Left lung (tissue), 14 donors: ENCODE measurements at regions of chr19 and their contacts with region 1.

Region 1: DNA sequence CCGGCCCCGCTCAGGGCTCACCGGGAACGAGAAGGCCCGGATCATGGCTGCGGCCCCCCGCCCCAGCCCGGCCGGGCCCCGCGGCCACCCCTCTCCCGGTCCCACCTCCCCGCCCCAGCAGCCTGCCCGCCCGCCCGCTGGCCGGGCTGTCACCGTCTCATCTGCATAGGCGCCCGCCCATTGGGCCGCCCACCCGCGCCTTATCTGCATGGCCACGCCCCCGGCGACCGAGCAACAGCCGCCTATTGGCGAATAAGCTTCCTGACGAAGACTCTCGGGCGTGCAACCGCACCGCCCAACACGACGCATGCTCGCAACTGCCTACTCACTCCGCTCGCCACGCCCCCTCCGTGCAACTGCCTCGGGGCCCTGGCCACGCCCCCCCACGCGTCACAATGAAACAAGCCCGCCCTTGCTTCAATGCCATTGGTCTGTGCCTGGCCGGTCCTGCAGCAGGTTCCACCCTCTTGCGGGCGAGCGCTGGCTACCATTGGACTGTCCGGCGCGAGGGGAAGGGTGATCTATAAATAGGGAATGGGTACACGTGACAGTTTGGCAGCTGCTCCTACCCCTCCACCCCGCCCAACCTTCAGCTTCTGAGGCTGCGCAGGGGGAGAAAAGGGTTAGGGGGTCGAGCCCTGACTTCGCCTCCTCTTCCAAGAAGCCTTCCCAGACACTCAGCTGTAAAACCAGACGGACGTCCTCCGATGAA is at the start of gene DACT3:
- DNase-seq: peak; percentile 99 to 100 (median 100)
- ATAC-seq: peak; percentile 95
- H3K4me3 ChIP-seq: peak within 1 kb of the TSS; percentile 40 to 54
- H3K27ac ChIP-seq: peak within 1 kb of the TSS; percentile 72 to 77
- H3K4me1 ChIP-seq: peaks cover 0 to 31% of the 10 kb centered on the region in 2 donors
- H3K27me3 ChIP-seq: peaks cover 14 to 47% of the 10 kb centered on the region in 2 donors
- CTCF ChIP-seq: peak in 1 of 2 donors; percentile 40
- polyA plus RNA-seq, gene DACT3: 37.6 to 53.4 (median 45.4) TPM

Region 2: GRCh38 chr19:46529622-46530462 is 131.3 kb before region 1 on chr19:
- intact Hi-C with region 1: loop called in 1 of 2 experiments (anchors 10 kb)
- DNase-seq: peak; percentile 54 to 89 (median 83)
- ATAC-seq: peak; percentile 87
- H3K4me3 ChIP-seq: no peak overlapping the region
- H3K27ac ChIP-seq: peak overlapping the region in 1 of 2 donors; percentile 23
- H3K4me1 ChIP-seq: peaks cover 6 to 17% of the 10 kb centered on the region in 2 donors
- H3K27me3 ChIP-seq: peaks cover 0 to 12% of the 10 kb centered on the region in 2 donors
- CTCF ChIP-seq: peak; percentile 85 to 90

Region 3: DNA sequence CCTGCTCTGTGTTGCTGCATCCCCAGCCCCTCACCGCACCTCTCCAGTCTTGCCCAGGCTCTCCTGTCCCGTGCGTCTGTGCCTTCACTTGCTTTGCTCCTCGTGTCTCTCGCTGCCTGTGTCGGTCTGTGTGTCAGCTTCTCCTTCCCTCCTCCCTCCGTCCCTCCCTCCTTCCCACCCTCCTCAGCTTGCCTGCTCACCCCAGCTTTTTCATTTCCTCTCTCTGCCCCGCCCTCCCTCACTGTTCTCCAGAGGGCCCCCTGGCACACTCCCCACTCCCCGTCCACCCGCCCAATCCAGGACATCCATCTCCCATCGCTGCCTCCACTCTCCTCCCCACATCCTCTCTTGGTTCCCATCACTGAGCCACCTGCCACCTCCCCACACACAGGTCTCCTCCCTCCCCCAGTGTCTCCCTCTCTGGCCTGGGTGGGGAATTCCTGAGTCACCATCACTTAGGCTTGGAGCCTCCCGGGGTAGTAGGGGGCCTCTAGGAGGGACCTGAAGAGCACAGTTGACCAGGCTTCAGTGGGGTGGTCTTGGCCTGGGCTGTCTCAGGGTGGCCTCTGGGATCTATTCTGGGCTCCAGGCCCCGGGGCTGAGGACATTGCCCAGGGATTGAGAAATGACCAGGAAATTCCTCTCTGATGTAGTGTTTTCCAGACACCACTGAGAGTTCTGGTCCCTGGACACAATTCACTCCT is 36.1 kb before region 1 on chr19 and contains the start of gene PTGIR:
- intact Hi-C with region 1: loop called in 1 of 2 experiments (anchors 5 kb)
- DNase-seq: peak in 3 of 4 donors; percentile 72 to 89 (median 78)
- ATAC-seq: peak; percentile 71
- H3K4me3 ChIP-seq: peak within 1 kb of the TSS; percentile 13 to 37
- H3K27ac ChIP-seq: peak within 1 kb of the TSS; percentile 64 to 75
- H3K4me1 ChIP-seq: peaks cover 13 to 58% of the 10 kb centered on the region in 2 donors
- H3K27me3 ChIP-seq: no peaks in the 10 kb centered on the region
- CTCF ChIP-seq: no peak
- polyA plus RNA-seq, gene PTGIR: 9.2 to 14.1 (median 12.0) TPM